BJ (cell line): ENCODE measurements at regions of chrX and their contacts with region 1.

Region 1: DNA sequence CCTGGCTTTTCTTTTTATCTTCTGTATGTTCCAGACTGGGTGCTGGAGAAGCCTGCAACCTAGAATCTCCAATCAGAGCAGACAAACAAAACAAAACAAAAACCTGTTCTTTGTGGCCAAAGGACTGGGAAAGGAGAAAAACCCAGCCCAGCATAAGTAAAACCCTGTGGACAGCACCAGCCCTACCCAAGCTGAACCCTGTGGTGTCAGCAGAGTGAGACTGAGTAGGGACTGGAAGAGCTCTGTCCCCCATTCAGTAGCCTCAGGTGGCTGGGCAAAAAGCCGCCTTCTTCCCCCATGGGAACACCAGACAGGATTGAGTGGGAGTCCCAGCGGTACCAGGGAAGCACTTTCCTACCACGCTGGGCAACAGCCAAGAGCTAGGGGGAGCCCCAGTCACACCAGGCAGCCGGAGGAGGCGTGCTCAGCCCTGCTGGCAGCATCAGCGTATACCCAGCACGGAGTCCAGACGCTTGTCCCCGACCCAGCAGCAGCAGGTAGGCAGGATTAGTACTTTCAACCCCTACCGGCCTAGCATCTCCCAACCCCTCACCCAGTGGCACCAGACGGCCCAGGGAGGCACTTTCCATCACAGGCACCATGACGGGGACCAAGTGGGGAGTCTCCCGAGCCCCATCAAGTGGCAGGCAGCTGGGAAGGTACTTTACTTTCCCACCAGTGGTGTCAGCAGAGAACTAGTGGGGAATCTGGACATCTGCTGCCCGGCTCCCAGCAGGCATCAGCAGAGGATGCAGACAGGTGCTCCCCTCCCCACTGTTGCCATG is 8.6 kb upstream of the JADE3 start:
- DNase-seq: no peak
- H3K4me3 ChIP-seq: peak overlapping the region; percentile 49
- H3K27me3 ChIP-seq: no peaks in the 10 kb centered on the region
- CTCF ChIP-seq: peak; percentile 74

Region 2: GRCh38 chrX:46770817-46771163 is 132.9 kb before region 1 on chrX:
- CTCF ChIA-PET with region 1: no interaction called
- POLR2A ChIA-PET with region 1: no interaction called
- DNase-seq: peak; percentile 63
- H3K4me3 ChIP-seq: no peak overlapping the region
- H3K27me3 ChIP-seq: no peaks in the 10 kb centered on the region
- CTCF ChIP-seq: no peak

Region 3: GRCh38 chrX:47030339-47030738 is 126.7 kb after region 1 on chrX:
- CTCF ChIA-PET with region 1: interaction called, 15 read pairs
- POLR2A ChIA-PET with region 1: no interaction called
- DNase-seq: no peak
- H3K4me3 ChIP-seq: no peak overlapping the region
- H3K27me3 ChIP-seq: no peaks in the 10 kb centered on the region
- CTCF ChIP-seq: peak; percentile 44

Region 4: GRCh38 chrX:47093248-47093647 is 189.6 kb after region 1 on chrX:
- CTCF ChIA-PET with region 1: interaction called, 16 read pairs
- POLR2A ChIA-PET with region 1: no interaction called
- DNase-seq: no peak
- H3K4me3 ChIP-seq: no peak overlapping the region
- H3K27me3 ChIP-seq: no peaks in the 10 kb centered on the region
- CTCF ChIP-seq: peak; percentile 36